IMR-90 (cell line): ENCODE measurements at regions of chr4 and their contacts with region 1.

Region 1: DNA sequence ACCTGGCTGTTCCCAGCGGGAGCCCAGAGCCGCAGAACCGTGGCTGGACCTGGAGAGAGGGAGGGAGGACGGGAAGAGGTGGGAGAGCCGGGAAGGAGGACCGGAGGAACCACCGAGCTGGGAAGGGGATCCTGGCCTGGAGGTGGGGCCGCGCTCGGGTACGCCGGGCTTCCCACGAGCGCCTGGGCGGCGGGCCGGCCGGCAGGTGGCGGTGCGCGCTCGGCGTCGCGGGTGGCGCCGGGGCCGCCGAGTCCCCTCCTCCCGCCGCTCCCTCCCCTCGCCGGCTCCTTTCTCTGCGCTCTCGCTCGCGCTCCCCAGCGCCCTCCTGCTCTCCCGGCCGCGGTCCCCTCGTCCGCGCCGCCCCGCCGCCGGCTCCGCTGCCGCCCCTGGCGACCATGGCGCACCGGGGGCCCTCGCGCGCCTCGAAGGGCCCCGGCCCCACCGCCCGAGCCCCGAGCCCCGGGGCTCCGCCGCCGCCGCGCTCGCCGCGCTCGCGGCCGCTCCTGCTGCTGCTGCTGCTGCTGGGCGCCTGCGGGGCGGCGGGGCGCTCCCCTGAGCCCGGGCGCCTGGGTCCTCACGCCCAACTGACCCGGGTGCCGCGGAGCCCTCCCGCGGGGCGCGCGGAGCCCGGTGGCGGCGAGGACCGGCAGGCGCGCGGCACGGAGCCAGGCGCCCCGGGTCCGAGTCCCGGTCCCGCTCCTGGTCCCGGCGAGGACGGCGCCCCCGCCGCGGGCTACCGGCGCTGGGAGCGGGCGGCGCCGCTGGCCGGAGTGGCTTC is at the start of gene SORCS2:
- DNase-seq: peak; percentile 39
- ATAC-seq: peak; percentile 96
- H3K4me3 ChIP-seq: peak within 1 kb of the TSS; percentile 43
- H3K27ac ChIP-seq: no peak within 1 kb of the TSS
- H3K4me1 ChIP-seq: peaks cover 5% of the 10 kb centered on the region; the same call in 1 of the 2 replicates
- H3K27me3 ChIP-seq: peaks cover 85% of the 10 kb centered on the region
- CTCF ChIP-seq: peak; percentile 85
- POLR2A ChIP-seq: no peak
- RAD21 ChIP-seq: peak; percentile 88
- total RNA-seq, gene SORCS2: 0.28 and 0.36 TPM in 2 replicates

Region 2: DNA sequence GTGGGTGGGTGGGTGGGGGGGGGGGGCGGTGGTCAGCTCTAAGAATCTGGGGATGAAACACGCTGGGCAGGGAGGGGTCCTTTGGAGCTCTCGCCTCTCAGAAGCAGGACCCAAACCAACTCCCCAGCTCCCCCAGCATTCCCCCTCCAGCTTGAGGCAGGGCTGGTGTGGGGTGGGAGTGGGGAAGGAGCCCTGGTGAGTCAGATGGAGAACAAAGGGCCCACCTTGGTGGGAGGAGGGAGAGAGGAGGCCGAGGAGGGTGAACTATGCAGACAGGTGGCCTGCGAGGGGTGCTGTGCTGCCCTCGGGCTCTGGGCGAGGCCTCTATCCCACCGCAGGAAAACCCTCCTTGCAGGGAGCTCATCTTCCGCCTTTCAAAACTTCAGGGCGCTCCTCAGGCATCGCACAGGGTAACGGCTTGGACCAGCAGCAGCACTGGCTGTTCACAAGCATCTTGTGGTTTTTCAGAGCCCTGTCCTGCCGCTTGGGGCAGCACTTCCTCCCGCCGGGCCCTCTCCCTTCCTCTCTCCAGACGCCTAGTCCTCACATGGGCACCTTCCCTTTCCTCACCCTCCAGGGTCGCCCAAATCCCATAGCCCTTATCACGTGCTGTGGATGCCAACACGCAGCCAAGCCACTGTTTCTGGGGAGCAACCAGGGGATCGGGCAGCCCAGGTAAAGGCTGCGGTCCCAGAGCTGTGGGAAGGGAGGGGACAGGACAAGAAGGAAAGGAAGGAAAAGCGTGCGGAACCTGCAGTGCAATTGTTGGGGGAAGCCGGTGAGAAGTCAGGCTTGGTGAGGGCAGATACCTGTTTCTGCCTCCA is 90.5 kb before region 1 on chr4:
- CTCF ChIA-PET with region 1: no interaction called
- POLR2A ChIA-PET with region 1: no interaction called
- dilution Hi-C with region 1: no loop called
- in situ Hi-C with region 1: no loop called
- intact Hi-C with region 1: loop called (anchors 5 kb)
- DNase-seq: peak; percentile 60
- ATAC-seq: peak; percentile 79
- H3K4me3 ChIP-seq: peak overlapping the region; percentile 20; the same call in 1 of the 2 replicates
- H3K27ac ChIP-seq: no peak overlapping the region
- H3K4me1 ChIP-seq: peaks cover 6% of the 10 kb centered on the region; the same call in 1 of the 2 replicates
- H3K27me3 ChIP-seq: peaks cover 19% of the 10 kb centered on the region
- CTCF ChIP-seq: peak; percentile 63
- POLR2A ChIP-seq: no peak
- RAD21 ChIP-seq: peak; percentile 45

Region 3: DNA sequence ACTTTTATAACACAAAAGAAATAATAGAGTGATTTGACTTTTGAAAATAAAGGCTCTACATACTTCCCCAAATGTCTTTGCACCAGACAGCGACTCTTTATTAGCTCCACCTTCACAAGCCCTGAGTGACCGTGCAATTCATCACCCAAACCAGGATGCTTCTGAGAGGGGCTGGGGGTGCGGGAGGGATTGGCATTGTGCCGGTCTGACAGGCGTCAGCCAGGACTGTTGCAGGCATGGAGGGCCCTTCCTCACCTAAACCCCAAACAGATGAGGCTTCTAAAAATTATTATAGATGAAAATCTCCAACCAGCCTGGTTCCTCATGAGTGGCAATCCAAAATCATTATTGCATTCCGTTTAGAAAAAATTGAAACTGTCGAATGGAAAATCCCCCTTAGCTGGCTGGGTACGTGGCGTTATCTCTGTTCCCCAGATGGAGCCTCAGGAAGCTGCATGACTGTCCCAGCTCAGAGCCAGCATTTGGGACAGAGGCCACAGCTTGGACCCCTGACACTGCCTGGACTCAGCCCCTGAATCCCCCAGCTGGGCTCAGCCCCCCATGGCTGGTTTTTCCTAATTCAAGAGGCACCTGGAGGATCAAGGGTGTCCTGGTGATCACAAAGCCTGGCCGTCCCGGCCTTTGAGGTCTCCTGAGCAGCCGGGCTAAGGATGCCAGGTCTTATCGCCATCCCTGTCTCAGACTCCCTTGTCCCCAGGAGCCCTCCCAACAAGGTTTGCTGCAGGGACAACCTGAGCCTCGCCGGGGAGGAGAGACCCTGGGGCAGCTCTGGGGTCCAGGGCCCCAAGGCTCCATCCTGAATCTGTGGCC is 60.3 kb after region 1 on chr4:
- CTCF ChIA-PET with region 1: no interaction called
- POLR2A ChIA-PET with region 1: no interaction called
- dilution Hi-C with region 1: no loop called
- in situ Hi-C with region 1: no loop called
- intact Hi-C with region 1: no loop called
- DNase-seq: no peak
- ATAC-seq: no peak
- H3K4me3 ChIP-seq: no peak overlapping the region
- H3K27ac ChIP-seq: no peak overlapping the region
- H3K4me1 ChIP-seq: no peaks in the 10 kb centered on the region
- H3K27me3 ChIP-seq: peaks cover 59% of the 10 kb centered on the region
- CTCF ChIP-seq: no peak
- POLR2A ChIP-seq: no peak
- RAD21 ChIP-seq: no peak

Region 4: DNA sequence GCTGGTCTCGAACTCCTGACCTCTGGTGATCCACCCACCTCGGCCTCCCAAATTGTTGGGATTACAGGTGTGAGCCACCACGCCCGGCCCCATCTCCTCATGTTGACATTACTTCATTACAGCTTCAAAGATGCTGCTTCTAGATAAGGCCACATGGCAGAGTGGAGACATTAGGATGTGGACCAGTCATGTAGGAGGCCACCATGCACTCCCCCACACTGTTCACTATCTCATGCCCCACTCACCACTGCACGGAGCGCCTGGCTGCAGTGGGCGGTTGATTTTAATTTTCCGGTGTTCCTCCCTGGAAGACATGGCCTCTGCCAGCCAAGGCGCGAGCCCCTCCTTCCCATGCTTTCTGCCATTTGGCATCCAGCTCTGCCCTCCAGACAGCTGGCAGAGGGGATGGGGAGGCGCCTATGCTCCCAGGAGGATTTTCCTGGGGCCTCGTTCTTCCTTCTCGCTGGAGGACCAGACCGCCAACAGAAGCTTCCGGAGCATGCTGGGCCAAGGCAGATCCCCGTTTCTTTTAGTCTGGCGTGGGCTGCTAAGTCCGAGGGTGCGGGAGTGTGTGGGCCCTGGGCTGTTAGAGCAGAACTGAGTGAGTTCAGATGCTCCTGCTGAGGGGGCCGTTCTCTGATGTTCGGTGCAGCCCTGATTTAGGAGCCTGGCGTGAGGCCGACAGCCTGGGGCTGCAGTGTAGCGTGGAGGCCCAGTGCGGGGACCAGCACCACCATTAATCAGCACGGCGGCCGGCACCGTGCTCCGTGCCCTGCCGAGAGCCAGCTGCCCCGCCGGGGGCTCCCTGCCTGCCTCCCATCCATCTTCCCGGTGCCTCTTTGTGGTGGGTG is 93.0 kb after region 1 on chr4:
- CTCF ChIA-PET with region 1: no interaction called
- POLR2A ChIA-PET with region 1: no interaction called
- dilution Hi-C with region 1: no loop called
- in situ Hi-C with region 1: loop called (anchors 5 kb)
- intact Hi-C with region 1: no loop called
- DNase-seq: no peak
- ATAC-seq: no peak
- H3K4me3 ChIP-seq: no peak overlapping the region
- H3K27ac ChIP-seq: no peak overlapping the region
- H3K4me1 ChIP-seq: no peaks in the 10 kb centered on the region
- H3K27me3 ChIP-seq: peaks cover 72% of the 10 kb centered on the region
- CTCF ChIP-seq: no peak
- POLR2A ChIP-seq: no peak
- RAD21 ChIP-seq: no peak

Region 5: GRCh38 chr4:7295911-7296660 is 103.6 kb after region 1 on chr4:
- CTCF ChIA-PET with region 1: interaction called, 10 read pairs
- POLR2A ChIA-PET with region 1: interaction called, 3 read pairs
- dilution Hi-C with region 1: no loop called
- in situ Hi-C with region 1: no loop called
- intact Hi-C with region 1: loop called (anchors 1 kb)
- DNase-seq: peak; percentile 15
- ATAC-seq: peak; percentile 84
- H3K4me3 ChIP-seq: no peak overlapping the region
- H3K27ac ChIP-seq: no peak overlapping the region
- H3K4me1 ChIP-seq: no peaks in the 10 kb centered on the region
- H3K27me3 ChIP-seq: peaks cover 42% of the 10 kb centered on the region
- CTCF ChIP-seq: peak; percentile 72
- POLR2A ChIP-seq: no peak
- RAD21 ChIP-seq: peak; percentile 88

Region 6: GRCh38 chr4:7335344-7336069 is 143.1 kb after region 1 on chr4:
- CTCF ChIA-PET with region 1: interaction called, 6 read pairs
- POLR2A ChIA-PET with region 1: no interaction called
- dilution Hi-C with region 1: no loop called
- in situ Hi-C with region 1: no loop called
- intact Hi-C with region 1: loop called (anchors 1 kb)
- DNase-seq: peak; percentile 4
- ATAC-seq: peak; percentile 60
- H3K4me3 ChIP-seq: no peak overlapping the region
- H3K27ac ChIP-seq: no peak overlapping the region
- H3K4me1 ChIP-seq: no peaks in the 10 kb centered on the region; the same call in 1 of the 2 replicates
- H3K27me3 ChIP-seq: peaks cover 4% of the 10 kb centered on the region; the same call in 1 of the 2 replicates
- CTCF ChIP-seq: peak; percentile 59
- POLR2A ChIP-seq: no peak
- RAD21 ChIP-seq: peak; percentile 64

Region 7: DNA sequence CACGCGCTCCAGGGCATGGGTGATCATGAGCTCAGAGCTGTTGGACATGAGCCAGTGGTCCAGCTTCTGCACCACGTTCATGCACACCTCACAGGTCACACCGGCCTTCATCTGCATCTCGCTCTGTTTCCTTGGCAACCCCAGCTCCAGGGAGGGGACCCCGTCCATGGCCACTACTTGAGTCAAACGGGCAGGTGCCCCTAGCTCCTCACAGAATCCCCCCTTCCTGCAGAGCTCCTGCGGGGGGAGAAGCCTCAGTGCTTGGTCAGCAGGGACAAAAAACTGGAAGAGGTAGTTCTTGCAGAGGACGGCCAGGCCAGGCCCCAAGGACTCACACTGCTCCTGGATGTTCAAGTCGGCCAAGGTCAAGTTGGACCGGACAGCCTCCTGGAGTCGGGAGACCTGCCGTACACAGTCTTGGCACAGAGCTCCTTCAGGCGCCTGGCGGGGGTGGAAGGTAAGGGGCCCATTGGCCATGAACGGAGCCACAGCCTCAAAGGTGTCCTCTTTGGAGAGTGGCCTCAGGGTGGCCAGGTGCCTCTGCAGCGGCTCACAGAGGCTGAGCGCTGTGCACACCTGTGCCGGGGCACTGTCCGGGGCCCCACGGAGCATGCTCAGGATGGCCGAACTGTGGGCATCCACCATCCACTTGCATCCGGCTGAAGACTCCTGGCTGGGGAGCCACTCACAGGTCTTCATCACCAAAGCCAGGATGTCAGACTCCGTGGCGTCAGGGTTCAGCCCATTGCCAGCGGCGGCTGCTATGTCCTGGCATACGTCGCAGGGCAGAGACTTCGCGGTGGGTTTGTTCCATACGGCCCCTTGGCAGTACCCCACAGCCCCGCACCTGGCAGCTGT is 241.7 kb after region 1 on chr4:
- CTCF ChIA-PET with region 1: no interaction called
- POLR2A ChIA-PET with region 1: no interaction called
- dilution Hi-C with region 1: no loop called
- in situ Hi-C with region 1: no loop called
- intact Hi-C with region 1: no loop called
- DNase-seq: no peak
- ATAC-seq: no peak
- H3K4me3 ChIP-seq: no peak overlapping the region
- H3K27ac ChIP-seq: no peak overlapping the region
- H3K4me1 ChIP-seq: no peaks in the 10 kb centered on the region
- H3K27me3 ChIP-seq: peaks cover 3% of the 10 kb centered on the region
- CTCF ChIP-seq: no peak
- POLR2A ChIP-seq: no peak
- RAD21 ChIP-seq: no peak

Region 8: GRCh38 chr4:7444747-7445146 is 252.3 kb after region 1 on chr4:
- CTCF ChIA-PET with region 1: no interaction called
- POLR2A ChIA-PET with region 1: no interaction called
- dilution Hi-C with region 1: no loop called
- in situ Hi-C with region 1: no loop called
- intact Hi-C with region 1: no loop called
- DNase-seq: no peak
- ATAC-seq: no peak
- H3K4me3 ChIP-seq: no peak overlapping the region
- H3K27ac ChIP-seq: no peak overlapping the region
- H3K4me1 ChIP-seq: no peaks in the 10 kb centered on the region
- H3K27me3 ChIP-seq: peaks cover 23% of the 10 kb centered on the region
- CTCF ChIP-seq: no peak
- POLR2A ChIP-seq: no peak
- RAD21 ChIP-seq: no peak

Region 9: GRCh38 chr4:7719354-7720174 is 527.1 kb after region 1 on chr4:
- CTCF ChIA-PET with region 1: no interaction called
- POLR2A ChIA-PET with region 1: no interaction called
- dilution Hi-C with region 1: no loop called
- in situ Hi-C with region 1: loop called (anchors 10 kb)
- intact Hi-C with region 1: loop called (anchors 1 kb)
- DNase-seq: no peak
- ATAC-seq: peak; percentile 90
- H3K4me3 ChIP-seq: no peak overlapping the region
- H3K27ac ChIP-seq: no peak overlapping the region
- H3K4me1 ChIP-seq: no peaks in the 10 kb centered on the region
- H3K27me3 ChIP-seq: peaks cover 31% of the 10 kb centered on the region
- CTCF ChIP-seq: peak; percentile 73
- POLR2A ChIP-seq: no peak
- RAD21 ChIP-seq: peak; percentile 79